ENCODE measurements at regions of chr19 and their contacts with region 1.

Region 1: DNA sequence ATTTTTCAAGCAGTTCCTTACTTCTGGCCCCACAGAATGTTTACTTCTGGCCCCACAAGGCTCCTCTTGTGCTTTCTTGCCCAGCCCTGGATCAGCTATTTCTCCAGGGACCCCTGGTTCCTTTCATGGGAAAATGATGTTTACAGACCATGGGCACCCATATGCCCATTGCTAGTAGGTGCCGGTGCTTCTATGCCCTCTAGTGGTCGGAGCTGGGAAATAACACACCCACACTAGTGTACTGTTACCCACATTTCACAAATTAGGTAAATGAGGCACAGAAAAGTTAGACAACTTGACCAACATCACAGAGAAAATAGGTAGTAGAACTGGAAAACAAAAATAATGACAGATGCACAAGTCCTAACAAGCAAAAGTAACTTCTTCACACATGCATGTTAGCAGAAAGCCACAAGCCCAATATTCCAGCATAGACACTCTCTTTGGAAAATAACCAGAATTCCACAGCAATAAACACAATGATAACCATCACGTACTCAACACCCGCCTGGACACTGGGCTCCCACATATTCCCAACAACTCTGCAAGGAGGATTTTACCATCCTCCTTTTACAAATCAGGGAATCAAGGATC is 1.3 kb upstream of the CEACAM6 start:
- H3K4me3 ChIP-seq: no peak overlapping the region
- H3K27ac ChIP-seq: no peak overlapping the region
- H3K4me1 ChIP-seq: peaks cover 6% of the 10 kb centered on the region; the same call in 1 of the 2 replicates
- CTCF ChIP-seq: peak; percentile 37; the same call in 1 of the 2 replicates

Region 2: DNA sequence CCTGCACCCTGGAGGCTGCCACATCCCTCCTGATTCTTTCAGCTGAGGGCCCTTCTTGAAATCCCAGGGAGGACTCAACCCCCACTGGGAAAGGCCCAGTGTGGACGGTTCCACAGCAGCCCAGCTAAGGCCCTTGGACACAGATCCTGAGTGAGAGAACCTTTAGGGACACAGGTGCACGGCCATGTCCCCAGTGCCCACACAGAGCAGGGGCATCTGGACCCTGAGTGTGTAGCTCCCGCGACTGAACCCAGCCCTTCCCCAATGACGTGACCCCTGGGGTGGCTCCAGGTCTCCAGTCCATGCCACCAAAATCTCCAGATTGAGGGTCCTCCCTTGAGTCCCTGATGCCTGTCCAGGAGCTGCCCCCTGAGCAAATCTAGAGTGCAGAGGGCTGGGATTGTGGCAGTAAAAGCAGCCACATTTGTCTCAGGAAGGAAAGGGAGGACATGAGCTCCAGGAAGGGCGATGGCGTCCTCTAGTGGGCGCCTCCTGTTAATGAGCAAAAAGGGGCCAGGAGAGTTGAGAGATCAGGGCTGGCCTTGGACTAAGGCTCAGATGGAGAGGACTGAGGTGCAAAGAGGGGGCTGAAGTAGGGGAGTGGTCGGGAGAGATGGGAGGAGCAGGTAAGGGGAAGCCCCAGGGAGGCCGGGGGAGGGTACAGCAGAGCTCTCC is 52.5 kb before region 1 on chr19:
- CTCF ChIA-PET with region 1: interaction called, 26 read pairs
- POLR2A ChIA-PET with region 1: no interaction called
- H3K4me3 ChIP-seq: no peak overlapping the region
- H3K27ac ChIP-seq: no peak overlapping the region
- H3K4me1 ChIP-seq: peaks cover 3% of the 10 kb centered on the region; the same call in 1 of the 2 replicates
- CTCF ChIP-seq: peak; percentile 62

Region 3: GRCh38 chr19:41740415-41741243 is 13.4 kb before region 1 on chr19:
- CTCF ChIA-PET with region 1: interaction called, 49 read pairs
- POLR2A ChIA-PET with region 1: no interaction called
- H3K4me3 ChIP-seq: no peak overlapping the region
- H3K27ac ChIP-seq: no peak overlapping the region
- H3K4me1 ChIP-seq: no peaks in the 10 kb centered on the region
- CTCF ChIP-seq: no peak

Region 4: DNA sequence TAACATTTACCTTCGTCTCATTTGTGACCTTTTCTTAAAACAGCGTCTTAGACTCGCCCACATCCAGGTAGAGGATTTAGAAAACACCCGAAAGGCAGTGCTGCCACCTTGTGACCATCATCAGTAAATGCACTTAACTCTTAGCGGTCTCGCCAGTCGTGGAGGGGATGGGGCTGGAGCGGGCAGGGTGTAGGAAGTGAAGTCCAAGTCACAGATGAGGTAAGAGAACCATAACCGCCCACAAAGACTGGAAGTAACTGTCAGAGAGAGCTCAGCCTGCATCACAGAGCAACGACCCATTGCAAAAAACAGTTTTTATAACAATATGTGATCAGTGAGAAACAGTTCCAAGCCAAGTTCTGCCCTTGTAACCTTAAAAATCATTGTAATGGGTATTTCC is 31.6 kb after region 1 on chr19:
- CTCF ChIA-PET with region 1: interaction called, 226 read pairs
- POLR2A ChIA-PET with region 1: interaction called, 3 read pairs
- H3K4me3 ChIP-seq: no peak overlapping the region
- H3K27ac ChIP-seq: no peak overlapping the region
- H3K4me1 ChIP-seq: peaks cover 3% of the 10 kb centered on the region; the same call in 1 of the 2 replicates
- CTCF ChIP-seq: peak; percentile 70

Region 5: GRCh38 chr19:41811036-41811435 is 57.0 kb after region 1 on chr19:
- CTCF ChIA-PET with region 1: interaction called, 19 read pairs
- POLR2A ChIA-PET with region 1: no interaction called
- H3K4me3 ChIP-seq: no peak overlapping the region
- H3K27ac ChIP-seq: no peak overlapping the region
- H3K4me1 ChIP-seq: no peaks in the 10 kb centered on the region
- CTCF ChIP-seq: no peak

Region 6: DNA sequence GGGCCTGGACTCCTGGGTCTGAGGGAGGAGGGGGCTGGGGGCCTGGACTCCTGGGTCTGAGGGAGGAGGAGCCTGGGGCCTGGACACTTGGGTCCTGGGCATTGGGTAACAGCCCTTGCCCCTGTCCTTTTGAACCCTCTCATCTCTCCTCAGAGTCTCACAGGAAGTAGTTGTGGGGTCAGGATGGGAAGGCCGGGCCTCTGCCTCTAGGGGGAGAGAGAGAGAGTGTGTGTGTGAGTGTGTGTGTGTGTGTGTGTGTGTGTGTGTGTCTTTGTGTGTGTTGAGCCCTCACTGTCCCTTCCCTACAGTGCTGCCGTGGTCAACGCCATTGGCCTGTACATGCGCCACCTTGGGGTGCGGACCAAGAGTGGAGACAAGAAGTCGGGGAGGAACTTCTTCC is 139.9 kb after region 1 on chr19:
- CTCF ChIA-PET with region 1: no interaction called
- POLR2A ChIA-PET with region 1: no interaction called
- H3K4me3 ChIP-seq: no peak overlapping the region
- H3K27ac ChIP-seq: 0 out of 2 replicates have a peak overlapping the region, but pooled peaks have one; percentile 24
- H3K4me1 ChIP-seq: no peaks in the 10 kb centered on the region
- CTCF ChIP-seq: peak; percentile 95

Measured in HEK293 (cell line).